ENCODE measurements at regions of chr1 and their contacts with region 1.

Region 1: GRCh38 chr1:18581420-18581880 is 49.2 kb upstream of the PAX7 start:
- DNase-seq: peak; percentile 73
- ATAC-seq: peak; percentile 51
- H3K4me3 Mint-ChIP-seq: no peak overlapping the region
- H3K27ac Mint-ChIP-seq: no peak overlapping the region
- H3K4me1 Mint-ChIP-seq: no peaks in the 10 kb centered on the region
- H3K27me3 Mint-ChIP-seq: peaks cover 11% of the 10 kb centered on the region

Region 2: GRCh38 chr1:17661546-17662157 is 919.8 kb before region 1 on chr1:
- CTCF ChIA-PET with region 1: interaction called, 7 read pairs
- POLR2A ChIA-PET with region 1: no interaction called
- intact Hi-C with region 1: loop called in 1 of 2 experiments (anchors 2 kb)
- DNase-seq: peak; percentile 82
- ATAC-seq: no peak
- H3K4me3 Mint-ChIP-seq: no peak overlapping the region
- H3K27ac Mint-ChIP-seq: no peak overlapping the region
- H3K4me1 Mint-ChIP-seq: no peaks in the 10 kb centered on the region
- H3K27me3 Mint-ChIP-seq: no peaks in the 10 kb centered on the region

Region 3: DNA sequence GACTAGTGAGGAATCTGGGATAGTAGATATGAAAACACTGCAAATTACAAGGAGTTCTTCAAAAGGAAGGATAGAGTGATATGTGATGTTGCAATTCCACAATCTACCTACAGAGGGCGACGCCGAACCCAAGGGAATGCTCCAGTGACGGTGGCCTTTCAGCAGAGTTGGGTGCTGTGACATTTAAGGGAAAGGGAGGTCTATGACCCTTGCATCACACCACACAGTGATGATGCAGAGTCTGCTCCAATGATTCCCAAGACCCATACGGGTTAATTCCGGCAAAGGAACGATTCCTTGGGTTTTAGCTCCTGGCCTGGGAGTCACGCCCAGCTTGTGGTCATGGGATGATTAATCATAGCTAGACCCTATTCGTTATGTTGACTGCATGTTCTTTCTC is 596.9 kb before region 1 on chr1:
- CTCF ChIA-PET with region 1: no interaction called
- POLR2A ChIA-PET with region 1: no interaction called
- intact Hi-C with region 1: loop called in 1 of 2 experiments (anchors 2 kb)
- DNase-seq: peak; percentile 55
- ATAC-seq: no peak
- H3K4me3 Mint-ChIP-seq: no peak overlapping the region
- H3K27ac Mint-ChIP-seq: no peak overlapping the region
- H3K4me1 Mint-ChIP-seq: no peaks in the 10 kb centered on the region
- H3K27me3 Mint-ChIP-seq: peaks cover 2% of the 10 kb centered on the region

Region 4: GRCh38 chr1:18299441-18300338 is 281.8 kb before region 1 on chr1:
- CTCF ChIA-PET with region 1: interaction called, 8 read pairs
- POLR2A ChIA-PET with region 1: no interaction called
- intact Hi-C with region 1: loop called in 1 of 2 experiments (anchors 2 kb)
- DNase-seq: peak; percentile 28
- ATAC-seq: no peak
- H3K4me3 Mint-ChIP-seq: no peak overlapping the region
- H3K27ac Mint-ChIP-seq: no peak overlapping the region
- H3K4me1 Mint-ChIP-seq: no peaks in the 10 kb centered on the region
- H3K27me3 Mint-ChIP-seq: peaks cover 24% of the 10 kb centered on the region

Region 5: GRCh38 chr1:18556364-18556763 is 25.1 kb before region 1 on chr1:
- CTCF ChIA-PET with region 1: interaction called, 5 read pairs
- POLR2A ChIA-PET with region 1: no interaction called
- intact Hi-C with region 1: loop called in 1 of 2 experiments (anchors 2 kb)
- DNase-seq: peak; percentile 10
- ATAC-seq: no peak
- H3K4me3 Mint-ChIP-seq: no peak overlapping the region
- H3K27ac Mint-ChIP-seq: no peak overlapping the region
- H3K4me1 Mint-ChIP-seq: peaks cover 12% of the 10 kb centered on the region
- H3K27me3 Mint-ChIP-seq: peaks cover 56% of the 10 kb centered on the region

Region 6: GRCh38 chr1:18597160-18598042 is 16.0 kb after region 1 on chr1:
- CTCF ChIA-PET with region 1: interaction called, 23 read pairs
- POLR2A ChIA-PET with region 1: no interaction called
- intact Hi-C with region 1: no loop called
- DNase-seq: peak; percentile 75
- ATAC-seq: peak; percentile 58
- H3K4me3 Mint-ChIP-seq: no peak overlapping the region
- H3K27ac Mint-ChIP-seq: no peak overlapping the region
- H3K4me1 Mint-ChIP-seq: no peaks in the 10 kb centered on the region
- H3K27me3 Mint-ChIP-seq: peaks cover 19% of the 10 kb centered on the region